ENCODE measurements at regions of chr17 and their contacts with region 1.

Region 1: GRCh38 chr17:18141210-18141803 is 32.8 kb downstream of the MYO15A start:
- DNase-seq: peak in 8 of 14 experiments; percentile 17 to 81 (median 46)
- ATAC-seq: peak; percentile 85
- H3K4me3 ChIP-seq: no peak overlapping the region
- H3K4me3 Mint-ChIP-seq: no peak overlapping the region
- H3K27ac ChIP-seq: no peak overlapping the region
- H3K27ac Mint-ChIP-seq: no peak overlapping the region
- H3K4me1 ChIP-seq: peaks cover 9% of the 10 kb centered on the region
- H3K4me1 Mint-ChIP-seq: peaks cover 5% of the 10 kb centered on the region
- H3K27me3 ChIP-seq: no peaks in the 10 kb centered on the region
- H3K27me3 Mint-ChIP-seq: peaks cover 5% of the 10 kb centered on the region
- CTCF ChIP-seq: peak; percentile 73

Region 2: DNA sequence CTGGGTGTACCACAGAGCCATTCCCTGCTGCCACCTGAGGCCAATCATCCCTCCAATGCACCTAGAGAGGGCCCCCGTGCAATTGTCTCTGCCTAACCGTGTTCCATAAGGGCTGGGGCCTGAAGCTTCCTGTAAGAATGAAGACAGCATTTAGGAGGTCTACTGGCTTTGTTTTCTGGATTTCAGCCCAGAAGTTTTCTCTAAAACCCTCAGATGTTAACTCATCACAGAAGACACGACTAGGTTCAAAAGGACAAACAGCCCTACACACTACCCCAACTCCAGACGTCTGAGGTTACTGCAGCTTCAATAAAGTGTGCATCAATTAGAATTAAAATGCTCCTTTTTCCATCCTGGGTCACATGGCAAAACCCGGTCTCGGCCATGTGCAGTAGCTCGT is 64.4 kb before region 1 on chr17:
- CTCF ChIA-PET with region 1: no interaction called
- POLR2A ChIA-PET with region 1: no interaction called
- intact Hi-C with region 1: no loop called
- DNase-seq: no peak
- ATAC-seq: no peak
- H3K4me3 ChIP-seq: no peak overlapping the region
- H3K4me3 Mint-ChIP-seq: no peak overlapping the region
- H3K27ac ChIP-seq: no peak overlapping the region
- H3K27ac Mint-ChIP-seq: no peak overlapping the region
- H3K4me1 ChIP-seq: no peaks in the 10 kb centered on the region
- H3K4me1 Mint-ChIP-seq: no peaks in the 10 kb centered on the region
- H3K27me3 ChIP-seq: peaks cover 0 to 6% of the 10 kb centered on the region in 2 experiments
- H3K27me3 Mint-ChIP-seq: peaks cover 33% of the 10 kb centered on the region
- CTCF ChIP-seq: no peak

Region 3: GRCh38 chr17:18158022-18158600 is 16.8 kb after region 1 on chr17:
- CTCF ChIA-PET with region 1: interaction called, 4 read pairs
- POLR2A ChIA-PET with region 1: no interaction called
- intact Hi-C with region 1: loop called in 1 of 2 experiments (anchors 2 kb)
- DNase-seq: peak; percentile 90 to 98 (median 94)
- ATAC-seq: peak; percentile 93
- H3K4me3 ChIP-seq: peak overlapping the region; percentile 62
- H3K4me3 Mint-ChIP-seq: peak overlapping the region; percentile 85
- H3K27ac ChIP-seq: peak overlapping the region; percentile 36 to 61
- H3K27ac Mint-ChIP-seq: peak overlapping the region; percentile 81
- H3K4me1 ChIP-seq: peaks cover 25% of the 10 kb centered on the region
- H3K4me1 Mint-ChIP-seq: peaks cover 26% of the 10 kb centered on the region
- H3K27me3 ChIP-seq: no peaks in the 10 kb centered on the region
- H3K27me3 Mint-ChIP-seq: no peaks in the 10 kb centered on the region
- CTCF ChIP-seq: no peak

Region 4: DNA sequence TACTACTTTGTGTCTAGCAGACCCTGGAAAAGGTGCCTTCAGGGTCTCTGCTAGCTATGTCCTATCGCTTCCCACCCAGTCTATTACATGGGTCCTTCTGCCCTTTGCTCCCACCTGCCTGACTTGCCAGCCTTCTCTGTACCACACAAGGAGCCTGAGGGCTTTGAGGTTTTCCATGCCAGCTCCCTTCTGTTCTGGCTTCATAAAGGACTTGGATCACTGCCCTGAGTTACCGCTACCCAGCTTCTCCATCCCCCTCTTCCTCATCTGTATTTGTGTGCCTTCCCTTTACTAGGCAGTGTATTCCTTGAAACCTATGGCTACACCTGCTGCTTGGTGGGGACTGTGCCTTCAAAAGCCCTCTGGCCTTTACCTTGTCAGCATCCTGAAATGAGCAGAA is 64.6 kb after region 1 on chr17:
- CTCF ChIA-PET with region 1: no interaction called
- POLR2A ChIA-PET with region 1: no interaction called
- intact Hi-C with region 1: loop called in 1 of 2 experiments (anchors 5 kb)
- DNase-seq: no peak
- ATAC-seq: no peak
- H3K4me3 ChIP-seq: no peak overlapping the region
- H3K4me3 Mint-ChIP-seq: no peak overlapping the region
- H3K27ac ChIP-seq: no peak overlapping the region
- H3K27ac Mint-ChIP-seq: no peak overlapping the region
- H3K4me1 ChIP-seq: peaks cover 8% of the 10 kb centered on the region
- H3K4me1 Mint-ChIP-seq: peaks cover 8% of the 10 kb centered on the region
- H3K27me3 ChIP-seq: no peaks in the 10 kb centered on the region
- H3K27me3 Mint-ChIP-seq: no peaks in the 10 kb centered on the region
- CTCF ChIP-seq: no peak

Region 5: DNA sequence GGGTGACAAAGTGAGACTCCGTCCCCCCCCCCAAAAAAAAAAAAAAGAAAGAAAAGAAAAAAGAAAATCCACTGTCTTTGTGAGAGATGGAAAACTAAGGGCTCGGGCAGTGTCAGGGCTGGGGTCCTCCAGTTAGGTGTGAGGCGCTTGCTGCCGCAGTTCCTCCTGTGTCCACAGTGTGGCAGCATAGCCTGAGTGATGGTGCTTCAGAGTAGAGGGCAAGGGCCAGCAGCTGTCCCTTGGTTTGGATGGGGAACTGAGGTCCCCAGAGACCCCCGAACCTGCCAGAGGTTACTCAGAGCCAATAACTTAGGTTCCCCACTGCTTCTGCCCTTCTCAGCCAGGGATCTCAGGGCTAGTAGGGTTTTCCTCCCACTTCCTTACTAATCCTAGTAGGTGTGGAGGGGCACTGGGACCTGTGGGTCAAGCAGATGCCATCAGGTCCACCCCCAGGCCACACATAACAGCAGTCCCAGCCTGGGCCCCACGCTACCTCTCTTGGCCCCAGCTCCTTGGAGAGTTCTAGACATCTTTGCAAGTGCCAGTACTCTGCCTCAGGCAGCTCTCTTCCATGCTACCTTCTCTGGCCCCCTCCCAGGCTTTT is 76.2 kb after region 1 on chr17:
- CTCF ChIA-PET with region 1: no interaction called
- POLR2A ChIA-PET with region 1: no interaction called
- intact Hi-C with region 1: loop called (anchors 2 kb)
- DNase-seq: peak; percentile 53 to 82 (median 66)
- ATAC-seq: peak; percentile 97
- H3K4me3 ChIP-seq: no peak overlapping the region
- H3K4me3 Mint-ChIP-seq: no peak overlapping the region
- H3K27ac ChIP-seq: no peak overlapping the region
- H3K27ac Mint-ChIP-seq: no peak overlapping the region
- H3K4me1 ChIP-seq: no peaks in the 10 kb centered on the region
- H3K4me1 Mint-ChIP-seq: no peaks in the 10 kb centered on the region
- H3K27me3 ChIP-seq: no peaks in the 10 kb centered on the region
- H3K27me3 Mint-ChIP-seq: no peaks in the 10 kb centered on the region
- CTCF ChIP-seq: peak; percentile 89